ENCODE measurements at regions of chr5 and their contacts with region 1.

Region 1: GRCh38 chr5:95773335-95774059 is 42.4 kb downstream of the RHOBTB3 start:
- DNase-seq: no peak
- H3K4me3 ChIP-seq: no peak overlapping the region
- H3K27ac ChIP-seq: peak overlapping the region in 1 of 4 donors; percentile 2
- H3K4me1 ChIP-seq: peaks cover 11 to 30% (median 17%) of the 10 kb centered on the region in 4 donors
- H3K27me3 ChIP-seq: no peaks in the 10 kb centered on the region
- CTCF ChIP-seq: no peak
- EP300 ChIP-seq: no peak
- POLR2A ChIP-seq: no peak

Region 2: DNA sequence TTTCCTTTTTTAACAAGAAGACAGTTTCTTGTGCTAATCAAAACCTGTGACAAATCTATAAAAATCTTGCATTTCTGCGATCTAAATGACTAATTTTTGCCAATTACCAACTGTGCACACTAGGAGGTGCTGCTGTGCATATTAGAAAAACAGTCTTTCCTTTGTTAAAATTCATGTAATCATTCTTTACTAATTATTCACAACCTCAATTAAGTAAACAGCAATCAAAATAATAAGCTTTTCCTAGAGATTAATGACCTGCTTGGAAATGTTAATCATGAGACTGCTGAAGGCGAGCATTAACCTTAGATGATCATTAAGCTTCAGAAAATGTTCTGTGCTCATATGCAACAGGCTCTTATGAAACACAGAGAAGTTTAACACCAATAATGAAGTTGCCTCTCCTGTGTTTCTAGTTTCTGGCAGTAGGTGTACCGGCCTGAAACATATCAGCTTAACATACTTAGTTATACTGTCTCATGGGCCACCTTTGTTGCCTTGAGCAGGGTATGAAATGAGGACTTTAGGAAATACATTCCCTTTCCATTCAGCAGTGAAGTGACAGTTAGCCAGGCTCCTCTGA is 109.2 kb before region 1 on chr5:
- intact Hi-C with region 1: loop called (anchors 5 kb)
- DNase-seq: no peak
- H3K4me3 ChIP-seq: no peak overlapping the region
- H3K27ac ChIP-seq: peak overlapping the region; percentile 22 to 62 (median 52)
- H3K4me1 ChIP-seq: peaks cover 9 to 17% (median 13%) of the 10 kb centered on the region in 4 donors
- H3K27me3 ChIP-seq: no peaks in the 10 kb centered on the region
- CTCF ChIP-seq: peak; percentile 78 to 87 (median 79)
- EP300 ChIP-seq: no peak
- POLR2A ChIP-seq: no peak

Measured in esophagus muscularis mucosa (tissue), 4 donors.